Right ventricle myocardium inferior (tissue), 1 donor: ENCODE measurements at regions of chr13 and their contacts with region 1.

Region 1: DNA sequence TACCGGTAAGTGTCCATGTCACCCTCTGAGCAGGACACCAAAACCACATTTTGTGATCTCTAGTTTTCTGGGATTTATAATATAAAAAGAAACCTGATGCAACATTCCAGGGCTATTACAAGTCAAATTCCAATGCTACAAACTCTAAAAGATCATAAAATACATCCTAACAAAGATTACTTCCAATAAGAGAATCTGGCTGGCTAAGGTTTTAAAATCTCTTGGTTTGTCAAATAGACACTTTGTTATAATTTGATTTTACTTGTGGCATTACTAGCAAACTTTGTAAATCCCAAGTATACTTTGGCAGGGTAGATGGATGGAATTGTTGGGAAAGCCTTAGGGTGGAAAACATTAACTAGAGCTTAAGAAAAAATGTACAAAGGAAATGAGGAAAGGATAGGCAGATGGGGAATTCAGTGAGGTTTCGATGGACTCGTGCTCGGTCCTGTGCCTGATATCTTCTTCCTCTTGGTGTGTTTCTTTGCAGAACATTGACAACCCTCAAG is 74.0 kb upstream of the POMP start:
- DNase-seq: no peak
- ATAC-seq: no peak

Region 2: GRCh38 chr13:28539625-28540286 is 45.2 kb before region 1 on chr13:
- intact Hi-C with region 1: loop called (anchors 5 kb)
- DNase-seq: no peak
- ATAC-seq: no peak